Endothelial cell of umbilical vein (primary cell): ENCODE measurements at regions of chr2 and their contacts with region 1.

Region 1: GRCh38 chr2:180077295-180077906 is 70.3 kb upstream of the CWC22 start:
- DNase-seq: peak; percentile 32
- H3K4me3 ChIP-seq: no peak overlapping the region
- H3K27ac ChIP-seq: no peak overlapping the region
- H3K4me1 ChIP-seq: no peaks in the 10 kb centered on the region
- H3K27me3 ChIP-seq: no peaks in the 10 kb centered on the region
- CTCF ChIP-seq: peak; percentile 30 to 34
- POLR2A ChIP-seq: no peak

Region 2: DNA sequence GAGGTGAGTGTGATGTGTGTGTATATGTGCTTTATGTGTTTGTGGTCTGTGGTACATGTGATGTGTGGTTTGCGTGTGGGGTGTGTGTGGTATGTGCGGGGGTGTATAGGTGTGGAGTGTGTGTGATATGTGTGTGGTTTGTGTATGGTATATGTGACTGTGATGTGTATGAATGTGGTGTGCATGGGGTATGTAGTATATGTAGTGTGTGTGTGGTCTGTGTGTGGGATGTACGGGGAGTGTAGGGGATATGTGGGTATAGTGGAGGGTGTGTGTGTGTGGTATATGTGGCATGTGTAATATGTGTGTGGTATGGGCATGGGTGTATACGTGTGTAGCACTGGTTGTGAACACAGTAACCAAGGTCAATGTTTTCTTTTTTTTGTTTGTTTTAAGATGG is 303.4 kb before region 1 on chr2:
- CTCF ChIA-PET with region 1: no interaction called
- POLR2A ChIA-PET with region 1: no interaction called
- dilution Hi-C with region 1: no loop called
- intact Hi-C with region 1: loop called (anchors 10 kb)
- DNase-seq: no peak
- H3K4me3 ChIP-seq: no peak overlapping the region
- H3K27ac ChIP-seq: no peak overlapping the region
- H3K4me1 ChIP-seq: no peaks in the 10 kb centered on the region
- H3K27me3 ChIP-seq: no peaks in the 10 kb centered on the region
- CTCF ChIP-seq: no peak
- POLR2A ChIP-seq: no peak

Region 3: DNA sequence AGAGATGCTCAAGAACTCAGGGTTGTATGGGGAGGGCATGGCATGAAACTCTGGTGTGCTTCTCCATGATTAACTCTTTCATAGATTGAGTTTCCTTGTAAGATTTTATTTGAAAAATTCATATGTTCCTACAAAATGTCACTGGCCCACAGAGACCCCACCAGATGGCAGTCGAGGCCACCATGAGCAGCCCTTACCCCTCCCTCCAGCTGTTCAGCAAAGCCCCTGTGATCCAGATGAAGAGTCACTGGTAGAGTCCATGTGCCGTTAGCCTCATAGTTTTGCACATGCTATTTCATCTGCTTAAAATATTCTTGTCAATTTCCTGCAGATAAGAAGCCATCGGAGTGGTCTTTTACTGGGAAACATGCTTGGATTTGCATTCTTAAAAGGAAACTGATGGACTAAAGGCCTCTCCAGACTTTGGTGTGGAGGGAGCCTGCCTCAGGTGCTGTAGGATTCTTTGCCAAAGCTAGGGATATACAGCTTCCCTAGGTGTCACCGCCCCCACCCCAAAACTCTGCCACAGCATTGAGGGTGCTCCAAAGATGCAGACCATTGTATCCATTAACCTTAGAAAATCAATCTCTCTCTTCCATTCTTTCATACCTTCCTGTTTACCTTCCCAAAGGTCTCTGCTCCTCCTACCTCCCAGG is 234.8 kb before region 1 on chr2:
- CTCF ChIA-PET with region 1: interaction called, 3 read pairs
- POLR2A ChIA-PET with region 1: no interaction called
- dilution Hi-C with region 1: no loop called
- intact Hi-C with region 1: loop called (anchors 1 kb)
- DNase-seq: peak; percentile 11
- H3K4me3 ChIP-seq: no peak overlapping the region
- H3K27ac ChIP-seq: no peak overlapping the region
- H3K4me1 ChIP-seq: no peaks in the 10 kb centered on the region
- H3K27me3 ChIP-seq: peaks cover 2% of the 10 kb centered on the region in 2 experiments
- CTCF ChIP-seq: peak; percentile 23 to 42
- POLR2A ChIP-seq: no peak

Region 4: DNA sequence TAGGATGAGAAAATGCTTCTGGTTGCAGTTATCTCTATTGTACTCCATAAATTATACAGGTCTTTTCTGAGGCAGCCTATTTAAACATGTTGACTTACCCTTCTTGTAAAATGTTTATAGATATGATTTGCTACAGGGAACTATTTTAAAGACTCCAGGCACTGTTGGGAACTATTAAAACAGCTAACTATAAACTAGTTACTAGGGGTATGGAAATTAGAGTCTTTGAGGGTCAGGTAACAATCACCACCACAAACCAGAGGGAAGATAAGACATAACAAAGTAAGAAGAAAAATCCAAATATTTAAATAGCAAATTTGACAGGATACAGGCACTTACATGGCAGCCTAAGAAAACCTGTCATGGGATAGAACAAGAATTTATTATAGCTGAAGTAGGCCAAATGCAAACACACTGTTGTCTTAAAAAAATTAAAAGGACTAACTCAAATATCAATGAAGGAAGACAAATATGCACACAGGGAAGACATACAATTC is 180.7 kb after region 1 on chr2:
- CTCF ChIA-PET with region 1: no interaction called
- POLR2A ChIA-PET with region 1: no interaction called
- dilution Hi-C with region 1: no loop called
- intact Hi-C with region 1: no loop called
- DNase-seq: no peak
- H3K4me3 ChIP-seq: no peak overlapping the region
- H3K27ac ChIP-seq: no peak overlapping the region
- H3K4me1 ChIP-seq: no peaks in the 10 kb centered on the region
- H3K27me3 ChIP-seq: no peaks in the 10 kb centered on the region
- CTCF ChIP-seq: no peak
- POLR2A ChIP-seq: no peak

Region 5: GRCh38 chr2:180291060-180291459 is 213.7 kb after region 1 on chr2:
- CTCF ChIA-PET with region 1: no interaction called
- POLR2A ChIA-PET with region 1: no interaction called
- dilution Hi-C with region 1: no loop called
- intact Hi-C with region 1: no loop called
- DNase-seq: no peak
- H3K4me3 ChIP-seq: no peak overlapping the region
- H3K27ac ChIP-seq: no peak overlapping the region
- H3K4me1 ChIP-seq: no peaks in the 10 kb centered on the region
- H3K27me3 ChIP-seq: no peaks in the 10 kb centered on the region
- CTCF ChIP-seq: no peak
- POLR2A ChIP-seq: no peak